ENCODE measurements at regions of chr18 and their contacts with region 1.

Region 1: DNA sequence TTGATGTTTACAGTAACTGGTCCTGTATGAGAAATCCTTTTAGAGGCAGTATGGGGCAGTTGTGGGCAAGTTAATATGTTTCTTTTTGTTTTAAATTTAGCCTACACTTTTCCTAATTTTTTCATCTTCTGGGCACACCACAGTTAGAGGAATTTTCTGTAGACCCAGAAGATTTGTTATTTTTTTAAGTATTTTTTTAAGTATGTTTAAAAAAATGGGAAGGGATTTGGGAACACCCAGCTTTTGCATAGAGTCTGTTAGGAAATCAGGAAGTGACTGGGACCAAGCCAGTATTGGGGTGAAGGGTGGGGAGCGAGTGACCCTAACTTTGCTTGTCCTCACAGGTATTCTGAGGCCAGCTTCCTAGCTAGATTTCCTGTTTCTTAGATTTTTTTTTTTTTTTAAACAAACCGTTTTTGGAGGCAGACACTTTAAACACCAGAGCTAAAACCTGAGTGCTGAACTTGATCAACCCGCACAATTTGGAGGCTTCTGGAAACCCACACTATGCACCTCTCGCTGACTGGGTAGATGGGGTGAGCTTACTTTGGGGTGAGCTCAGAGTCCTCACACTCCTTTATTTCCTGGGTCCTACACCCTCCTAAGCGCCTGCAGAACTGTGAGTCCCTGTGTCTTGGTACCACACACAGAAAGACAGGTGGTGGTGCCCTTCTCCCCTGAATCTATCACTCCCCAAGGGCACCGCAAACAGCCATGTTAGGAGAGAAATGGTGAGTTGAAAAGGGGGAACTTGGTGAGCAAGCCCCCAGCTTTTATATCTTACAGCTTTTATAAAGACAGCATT is 5.2 kb downstream of the GATA6 start:
- DNase-seq: peak in 1 of 3 donors; percentile 46
- ATAC-seq: peak; percentile 10
- H3K4me3 ChIP-seq: no peak overlapping the region
- H3K4me1 ChIP-seq: peaks cover 9% of the 10 kb centered on the region
- CTCF ChIP-seq: no peak

Region 2: GRCh38 chr18:21090680-21091079 is 1083.9 kb before region 1 on chr18:
- intact Hi-C with region 1: no loop called
- DNase-seq: no peak
- ATAC-seq: no peak
- H3K4me3 ChIP-seq: no peak overlapping the region
- H3K4me1 ChIP-seq: no peaks in the 10 kb centered on the region
- CTCF ChIP-seq: no peak

Region 3: DNA sequence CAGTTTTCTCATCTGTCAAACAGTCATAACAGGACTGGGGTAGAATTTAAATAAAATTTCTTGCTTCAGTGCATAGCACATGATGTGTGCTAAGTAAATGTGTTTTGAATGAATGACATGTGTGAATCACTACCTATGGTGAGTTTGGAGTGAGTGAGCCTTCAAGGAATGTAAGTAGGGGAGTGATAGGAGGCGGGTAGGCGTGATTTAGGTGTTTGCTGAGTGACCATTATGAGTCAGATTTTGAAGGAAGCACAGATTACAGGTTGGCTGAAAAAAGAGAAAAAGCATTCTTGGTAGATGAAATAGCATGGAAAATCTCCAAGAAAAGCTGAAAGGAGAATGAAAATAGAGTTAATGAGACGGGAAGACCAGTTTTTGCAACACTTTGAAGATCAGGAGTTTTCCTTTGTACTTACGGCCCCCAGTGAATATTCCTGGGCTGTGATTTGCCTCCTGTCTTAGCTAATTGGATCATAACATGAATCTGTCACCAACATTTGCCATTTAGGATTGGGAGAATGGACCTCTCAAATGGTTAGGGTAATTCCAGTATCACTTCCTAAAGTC is 142.1 kb before region 1 on chr18:
- intact Hi-C with region 1: no loop called
- DNase-seq: no peak
- ATAC-seq: peak; percentile 97
- H3K4me3 ChIP-seq: no peak overlapping the region
- H3K4me1 ChIP-seq: peaks cover 4% of the 10 kb centered on the region
- CTCF ChIP-seq: no peak

Region 4: DNA sequence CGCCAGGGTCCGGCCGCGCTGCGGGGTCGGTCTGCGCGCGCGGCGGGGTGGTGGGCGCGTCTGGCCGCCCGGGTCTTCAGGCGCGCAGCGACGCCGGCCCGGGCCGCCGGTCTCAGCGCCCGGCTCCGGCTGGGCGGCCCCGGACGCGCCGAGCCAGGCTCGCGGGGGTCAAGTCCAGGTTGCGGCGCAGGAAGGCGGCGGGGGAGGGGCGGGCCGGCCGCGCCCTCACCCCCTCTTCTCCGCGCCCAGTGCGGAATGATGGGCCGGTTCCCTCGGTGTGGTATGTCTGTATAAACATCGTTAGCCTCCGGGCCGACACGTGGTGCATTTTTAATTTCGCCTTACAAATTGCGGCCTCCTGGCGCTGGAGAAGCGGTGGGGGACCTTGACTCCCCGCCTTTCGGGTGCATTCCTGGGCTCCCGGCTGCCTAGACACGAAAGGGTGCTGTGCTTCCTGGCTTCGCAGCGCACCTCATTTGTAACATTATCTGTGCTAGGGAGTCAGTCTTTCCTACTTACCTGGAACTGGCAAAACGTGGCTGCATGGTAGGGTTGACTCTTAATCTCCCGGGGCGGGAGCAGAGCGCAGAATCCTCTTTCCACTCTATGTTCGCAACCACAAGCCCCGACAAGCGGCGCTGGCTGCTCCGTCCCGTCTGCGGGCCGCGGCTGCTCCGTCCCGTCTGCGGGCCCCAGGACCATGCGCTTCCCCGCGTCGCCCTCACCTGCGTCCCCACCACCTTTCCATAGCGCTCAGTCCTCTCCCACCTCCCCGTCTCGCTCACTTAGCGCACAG is 174.2 kb after region 1 on chr18:
- intact Hi-C with region 1: loop called in 1 of 2 experiments (anchors 5 kb)
- DNase-seq: peak; percentile 76 to 82 (median 76)
- ATAC-seq: peak; percentile 70
- H3K4me3 ChIP-seq: peak overlapping the region; percentile 17
- H3K4me1 ChIP-seq: peaks cover 25% of the 10 kb centered on the region
- CTCF ChIP-seq: no peak